Endothelial cell of umbilical vein (primary cell): ENCODE measurements at regions of chr11 and their contacts with region 1.

Region 1: DNA sequence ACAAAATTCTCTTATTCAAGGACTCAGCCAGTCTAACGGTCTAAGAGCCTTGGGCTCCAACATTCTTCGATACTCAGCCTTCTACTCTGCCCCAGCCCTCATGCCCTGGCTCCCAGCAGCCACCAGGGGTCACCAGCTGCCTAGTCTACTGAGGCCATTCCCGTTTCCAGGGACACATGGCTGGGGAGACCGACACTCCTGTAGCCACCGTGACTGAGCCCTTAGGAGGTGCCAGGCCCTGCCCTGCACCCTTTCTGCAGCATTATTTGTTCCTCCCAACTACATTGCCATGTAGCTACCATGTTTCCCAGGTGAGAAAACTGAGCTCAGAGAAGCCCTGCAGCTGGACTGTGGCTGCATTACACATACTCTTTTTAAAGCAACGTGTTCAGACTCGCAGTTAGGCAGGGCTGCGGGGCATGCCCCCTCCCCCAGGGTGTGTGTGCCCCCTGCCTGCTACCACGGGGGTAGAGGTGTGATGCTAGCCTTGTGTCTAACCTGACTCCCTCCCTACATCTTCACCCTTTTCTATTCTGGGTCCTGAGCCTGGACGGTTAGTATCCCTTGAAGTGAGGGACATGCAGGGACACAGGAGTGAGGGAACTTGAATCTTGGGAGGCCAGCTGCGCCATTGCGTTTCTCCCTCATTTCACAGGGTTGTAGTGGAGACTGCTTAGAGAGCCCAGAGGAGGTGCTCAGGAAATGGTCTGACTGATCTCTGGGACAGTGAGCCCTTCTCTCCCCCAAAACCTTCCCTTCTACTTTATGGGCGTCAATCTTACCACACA is 17.5 kb downstream of the ATG16L2 start:
- DNase-seq: peak; percentile 80
- H3K4me3 ChIP-seq: no peak overlapping the region
- H3K27ac ChIP-seq: no peak overlapping the region
- H3K4me1 ChIP-seq: peaks cover 9% of the 10 kb centered on the region
- H3K27me3 ChIP-seq: no peaks in the 10 kb centered on the region
- CTCF ChIP-seq: peak; percentile 91 to 97
- POLR2A ChIP-seq: no peak

Region 2: DNA sequence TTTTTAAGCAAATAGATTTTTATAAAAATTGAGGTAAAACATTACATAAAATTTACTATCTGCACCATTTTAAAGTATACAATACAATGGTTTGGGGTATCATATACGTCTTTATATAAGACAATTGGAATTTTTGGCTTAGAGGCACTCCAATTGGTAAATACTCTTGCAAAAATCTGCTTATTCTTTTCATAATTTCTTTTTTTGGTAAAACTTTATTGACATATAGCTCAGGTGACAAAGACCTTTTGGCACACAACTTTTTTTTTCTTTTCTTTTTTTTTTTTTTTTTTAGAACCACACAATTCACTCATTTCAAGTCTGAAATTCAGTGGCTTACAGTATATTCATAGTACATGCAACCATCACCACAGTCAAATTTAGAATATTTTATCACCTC is 40.3 kb after region 1 on chr11:
- CTCF ChIA-PET with region 1: no interaction called
- POLR2A ChIA-PET with region 1: no interaction called
- dilution Hi-C with region 1: no loop called
- intact Hi-C with region 1: no loop called
- DNase-seq: no peak
- H3K4me3 ChIP-seq: no peak overlapping the region
- H3K27ac ChIP-seq: no peak overlapping the region
- H3K4me1 ChIP-seq: peaks cover 9% of the 10 kb centered on the region
- H3K27me3 ChIP-seq: no peaks in the 10 kb centered on the region
- CTCF ChIP-seq: no peak
- POLR2A ChIP-seq: no peak

Region 3: DNA sequence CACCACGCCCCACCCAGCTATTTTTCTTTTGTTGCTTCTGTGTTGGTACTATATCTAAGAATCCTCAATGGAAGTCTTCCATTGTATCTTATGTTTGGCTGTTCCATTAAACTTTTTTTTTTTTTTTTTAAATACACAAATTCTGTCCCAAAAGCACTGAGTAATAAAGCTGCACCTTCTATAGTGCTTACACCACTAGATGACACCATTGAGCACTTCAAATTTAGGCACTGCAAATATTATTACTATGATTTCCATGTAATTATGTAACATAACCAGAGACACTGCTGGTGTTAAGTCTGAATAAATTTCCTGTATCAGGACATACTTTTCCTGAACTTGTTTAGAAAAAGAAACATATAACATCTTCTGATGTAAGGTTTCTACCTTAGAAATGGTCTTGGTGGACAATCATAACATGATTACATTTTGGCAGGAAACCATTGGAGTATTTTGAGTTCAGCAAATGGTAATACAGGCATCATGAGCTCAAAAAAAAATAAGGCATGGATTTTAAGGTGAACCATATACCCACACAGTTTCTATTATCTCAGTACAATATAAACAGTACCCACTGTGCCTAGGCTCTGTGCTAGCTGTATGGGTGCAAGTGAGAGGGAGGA is 93.0 kb after region 1 on chr11:
- CTCF ChIA-PET with region 1: interaction called, 3 read pairs
- POLR2A ChIA-PET with region 1: no interaction called
- dilution Hi-C with region 1: no loop called
- intact Hi-C with region 1: loop called (anchors 5 kb)
- DNase-seq: peak; percentile 77
- H3K4me3 ChIP-seq: no peak overlapping the region
- H3K27ac ChIP-seq: no peak overlapping the region
- H3K4me1 ChIP-seq: peaks cover 4% of the 10 kb centered on the region
- H3K27me3 ChIP-seq: no peaks in the 10 kb centered on the region
- CTCF ChIP-seq: peak; percentile 29 to 32
- POLR2A ChIP-seq: no peak

Region 4: GRCh38 chr11:73236854-73237253 is 405.1 kb after region 1 on chr11:
- CTCF ChIA-PET with region 1: interaction called, 30 read pairs
- POLR2A ChIA-PET with region 1: no interaction called
- dilution Hi-C with region 1: no loop called
- intact Hi-C with region 1: loop called (anchors 1 kb)
- DNase-seq: peak; percentile 61
- H3K4me3 ChIP-seq: no peak overlapping the region
- H3K27ac ChIP-seq: no peak overlapping the region
- H3K4me1 ChIP-seq: peaks cover 7% of the 10 kb centered on the region
- H3K27me3 ChIP-seq: no peaks in the 10 kb centered on the region
- CTCF ChIP-seq: peak; percentile 65 to 81
- POLR2A ChIP-seq: no peak

Region 5: GRCh38 chr11:73242251-73243079 is 410.8 kb after region 1 on chr11:
- CTCF ChIA-PET with region 1: interaction called, 30 read pairs
- POLR2A ChIA-PET with region 1: interaction called, 5 read pairs
- dilution Hi-C with region 1: no loop called
- intact Hi-C with region 1: loop called (anchors 1 kb)
- DNase-seq: peak; percentile 84
- H3K4me3 ChIP-seq: no peak overlapping the region
- H3K27ac ChIP-seq: no peak overlapping the region
- H3K4me1 ChIP-seq: peaks cover 11% of the 10 kb centered on the region
- H3K27me3 ChIP-seq: no peaks in the 10 kb centered on the region
- CTCF ChIP-seq: peak; percentile 88 to 89
- POLR2A ChIP-seq: no peak

Region 6: GRCh38 chr11:73335204-73335923 is 503.7 kb after region 1 on chr11:
- CTCF ChIA-PET with region 1: interaction called, 3 read pairs
- POLR2A ChIA-PET with region 1: no interaction called
- dilution Hi-C with region 1: no loop called
- intact Hi-C with region 1: loop called (anchors 2 kb)
- DNase-seq: peak; percentile 88
- H3K4me3 ChIP-seq: no peak overlapping the region
- H3K27ac ChIP-seq: peak overlapping the region; percentile 70
- H3K4me1 ChIP-seq: peaks cover 33% of the 10 kb centered on the region
- H3K27me3 ChIP-seq: no peaks in the 10 kb centered on the region
- CTCF ChIP-seq: peak; percentile 95 to 96
- POLR2A ChIP-seq: no peak